OCI-LY7 (cell line): ENCODE measurements at regions of chr3 and their contacts with region 1.

Region 1: GRCh38 chr3:98556164-98557130 is 24.7 kb downstream of the GPR15 start:
- DNase-seq: peak; percentile 22
- H3K4me3 ChIP-seq: peak overlapping the region; percentile 21
- H3K27ac ChIP-seq: peak overlapping the region; percentile 35
- H3K4me1 ChIP-seq: peaks cover 78% of the 10 kb centered on the region
- CTCF ChIP-seq: no peak

Region 2: DNA sequence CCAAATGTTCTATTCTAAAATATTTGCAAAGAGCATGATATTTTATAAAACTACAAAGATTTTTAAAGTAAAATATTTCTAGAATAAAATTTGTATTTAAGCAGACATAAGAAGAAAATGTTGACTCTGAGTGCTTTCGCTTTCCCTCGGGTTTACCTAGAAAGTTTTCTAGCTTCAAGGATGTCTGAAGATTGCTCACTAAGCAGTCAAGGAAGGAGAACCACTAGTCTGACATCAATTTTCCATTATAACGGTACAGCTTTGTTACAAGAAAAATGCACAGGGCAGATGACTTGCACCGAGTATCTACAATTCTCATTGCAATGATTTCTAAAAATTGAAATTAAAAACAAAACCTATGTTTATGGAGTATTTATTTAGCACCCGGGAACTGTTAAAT is 10.5 kb before region 1 on chr3:
- CTCF ChIA-PET with region 1: no interaction called
- POLR2A ChIA-PET with region 1: interaction called, 28 read pairs
- intact Hi-C with region 1: no loop called
- DNase-seq: peak; percentile 41
- H3K4me3 ChIP-seq: peak overlapping the region; percentile 29
- H3K27ac ChIP-seq: no peak overlapping the region
- H3K4me1 ChIP-seq: peaks cover 37% of the 10 kb centered on the region
- CTCF ChIP-seq: no peak